GM12878 (cell line): ENCODE measurements at regions of chr14 and their contacts with region 1.

Region 1: GRCh38 chr14:70816525-70816924 is 7.2 kb upstream of the MAP3K9 start:
- DNase-seq: no peak
- ATAC-seq: no peak
- H3K4me3 ChIP-seq: no peak overlapping the region
- H3K27ac ChIP-seq: no peak overlapping the region
- H3K4me1 ChIP-seq: peaks cover 10% of the 10 kb centered on the region
- H3K27me3 ChIP-seq: no peaks in the 10 kb centered on the region
- CTCF ChIP-seq: no peak
- EP300 ChIP-seq: no peak
- POLR2A ChIP-seq: no peak
- RAD21 ChIP-seq: no peak

Region 2: DNA sequence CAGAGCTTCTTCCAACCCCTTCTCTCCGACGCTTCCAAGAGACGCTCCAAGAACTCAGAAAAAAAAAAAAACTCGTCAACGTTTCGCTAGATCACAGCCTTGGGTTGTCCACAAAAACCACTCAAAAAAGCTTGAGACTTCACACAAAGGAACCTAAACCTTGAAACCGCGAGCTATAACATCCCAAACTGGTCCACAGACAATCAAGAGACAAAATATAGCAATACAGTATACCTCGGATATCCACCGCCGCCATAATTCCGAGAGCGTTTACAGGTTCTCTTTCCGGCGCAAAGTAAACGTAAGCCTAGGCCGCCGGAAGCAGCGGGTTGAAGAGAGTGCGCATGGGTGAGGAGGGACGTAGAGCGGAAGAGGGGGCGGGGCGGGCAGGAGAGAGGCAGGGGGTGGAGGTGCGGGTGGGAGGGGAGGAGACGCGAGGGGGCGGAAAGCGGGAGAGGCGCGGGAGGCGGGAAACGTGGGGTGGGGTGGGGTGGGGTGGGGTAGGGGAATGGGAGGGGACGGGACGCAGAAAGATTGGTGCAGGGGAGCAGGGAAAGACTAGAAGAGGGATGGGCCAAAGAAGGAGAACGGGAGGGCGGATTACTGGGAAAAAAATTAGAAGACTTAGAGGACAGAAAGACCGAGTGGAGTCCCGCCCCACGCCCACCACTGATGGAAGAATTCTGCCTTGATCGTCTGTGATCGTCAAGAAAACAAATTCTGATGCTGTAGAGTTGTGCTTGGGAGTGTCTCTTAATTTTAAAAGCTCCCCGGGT is 216.0 kb before region 1 on chr14 and contains the start of gene MED6:
- CTCF ChIA-PET with region 1: interaction called, 11 read pairs
- POLR2A ChIA-PET with region 1: no interaction called
- RAD21 ChIA-PET with region 1: no interaction called
- SMC1A ChIA-PET with region 1: interaction called, 7 read pairs
- in situ Hi-C with region 1: no loop called
- intact Hi-C with region 1: loop called (anchors 2 kb)
- DNase-seq: peak; percentile 69
- ATAC-seq: peak; percentile 97
- H3K4me3 ChIP-seq: peak within 1 kb of the TSS; percentile 90
- H3K27ac ChIP-seq: peak within 1 kb of the TSS; percentile 83
- H3K4me1 ChIP-seq: peaks cover 16% of the 10 kb centered on the region
- H3K27me3 ChIP-seq: no peaks in the 10 kb centered on the region
- CTCF ChIP-seq: no peak
- EP300 ChIP-seq: no peak
- POLR2A ChIP-seq: peak; percentile 81
- RAD21 ChIP-seq: no peak
- polyA plus RNA-seq, gene MED6: 36.6 to 40.0 TPM

Region 3: GRCh38 chr14:70707138-70708038 is 109.1 kb before region 1 on chr14:
- CTCF ChIA-PET with region 1: interaction called, 36 read pairs
- POLR2A ChIA-PET with region 1: no interaction called
- RAD21 ChIA-PET with region 1: interaction called, 16 read pairs
- SMC1A ChIA-PET with region 1: interaction called, 5 read pairs
- in situ Hi-C with region 1: no loop called
- intact Hi-C with region 1: no loop called
- DNase-seq: peak; percentile 93
- ATAC-seq: peak; percentile 97
- H3K4me3 ChIP-seq: no peak overlapping the region
- H3K27ac ChIP-seq: peak overlapping the region; percentile 76
- H3K4me1 ChIP-seq: peaks cover 20% of the 10 kb centered on the region
- H3K27me3 ChIP-seq: no peaks in the 10 kb centered on the region
- CTCF ChIP-seq: no peak
- EP300 ChIP-seq: peak; percentile 37 to 50; a peak in 1 of 4 replicates
- POLR2A ChIP-seq: no peak
- RAD21 ChIP-seq: 0 out of 2 replicates have a peak, but pooled peaks have one; percentile 2

Region 4: GRCh38 chr14:70803321-70804310 is 12.9 kb before region 1 on chr14:
- CTCF ChIA-PET with region 1: interaction called, 25 read pairs
- POLR2A ChIA-PET with region 1: interaction called, 3 read pairs
- RAD21 ChIA-PET with region 1: interaction called, 21 read pairs
- SMC1A ChIA-PET with region 1: interaction called, 12 read pairs
- in situ Hi-C with region 1: no loop called
- intact Hi-C with region 1: no loop called
- DNase-seq: peak; percentile 66
- ATAC-seq: peak; percentile 96
- H3K4me3 ChIP-seq: peak overlapping the region; percentile 19; the same call in 1 of the 2 replicates
- H3K27ac ChIP-seq: no peak overlapping the region; the same call in 1 of the 2 replicates
- H3K4me1 ChIP-seq: peaks cover 38% of the 10 kb centered on the region
- H3K27me3 ChIP-seq: no peaks in the 10 kb centered on the region
- CTCF ChIP-seq: peak in 2 of 3 experiments; percentile 6 to 23; a peak in 2 of 6 replicates
- EP300 ChIP-seq: peak; percentile 35 to 86; a peak in 3 of 4 replicates
- POLR2A ChIP-seq: no peak
- RAD21 ChIP-seq: no peak

Region 5: DNA sequence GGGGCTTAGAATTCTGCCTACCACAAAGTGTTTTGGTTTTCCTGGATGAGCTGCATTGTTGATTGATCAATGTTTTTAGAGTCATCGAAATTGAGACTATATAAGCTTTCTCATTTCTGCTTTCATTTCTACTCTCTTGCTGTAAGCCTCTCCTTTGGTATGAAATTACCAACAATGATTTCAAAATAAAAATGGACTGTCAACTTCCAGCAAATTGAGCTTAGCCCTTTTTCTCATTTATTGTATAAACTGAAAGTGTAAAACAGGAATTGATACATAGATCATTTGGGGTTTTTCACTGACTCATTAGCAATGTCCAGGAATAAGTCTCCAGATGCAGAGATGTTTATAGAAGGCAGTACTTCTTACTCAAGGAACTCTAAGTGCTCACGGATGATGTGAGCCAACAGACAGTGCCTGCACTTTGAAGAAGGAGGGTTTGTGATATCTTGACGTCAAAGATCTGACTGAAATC is 70.7 kb after region 1 on chr14:
- CTCF ChIA-PET with region 1: interaction called, 14 read pairs
- POLR2A ChIA-PET with region 1: interaction called, 5 read pairs
- RAD21 ChIA-PET with region 1: interaction called, 4 read pairs
- SMC1A ChIA-PET with region 1: interaction called, 13 read pairs
- in situ Hi-C with region 1: no loop called
- intact Hi-C with region 1: no loop called
- DNase-seq: peak; percentile 71
- ATAC-seq: peak; percentile 72
- H3K4me3 ChIP-seq: peak overlapping the region; percentile 56
- H3K27ac ChIP-seq: peak overlapping the region; percentile 98
- H3K4me1 ChIP-seq: peaks cover 65% of the 10 kb centered on the region
- H3K27me3 ChIP-seq: no peaks in the 10 kb centered on the region
- CTCF ChIP-seq: no peak
- EP300 ChIP-seq: peak in 1 of 2 experiments; percentile 54; a peak in 1 of 4 replicates
- POLR2A ChIP-seq: no peak
- RAD21 ChIP-seq: no peak

Region 6: DNA sequence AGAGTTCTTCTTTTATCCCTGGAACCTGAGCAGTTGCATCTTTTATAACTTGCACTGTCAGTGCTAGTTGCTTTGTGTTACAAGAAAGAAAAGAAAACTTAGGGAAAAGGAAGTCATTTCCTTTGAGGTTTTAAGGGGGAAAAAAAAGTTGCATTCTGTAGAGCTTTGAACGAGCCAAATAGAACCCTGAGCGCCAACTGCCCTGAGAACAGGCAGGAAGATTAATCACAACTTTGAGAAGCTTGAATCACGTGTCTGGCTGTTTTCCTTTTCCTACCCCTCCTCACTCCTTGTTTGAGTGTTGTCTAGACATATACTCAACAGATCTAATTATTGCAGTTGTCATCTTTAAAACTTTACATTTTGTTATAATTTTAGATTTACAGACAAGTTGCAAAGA is 103.2 kb after region 1 on chr14:
- CTCF ChIA-PET with region 1: interaction called, 10 read pairs
- POLR2A ChIA-PET with region 1: no interaction called
- RAD21 ChIA-PET with region 1: interaction called, 6 read pairs
- SMC1A ChIA-PET with region 1: interaction called, 5 read pairs
- in situ Hi-C with region 1: no loop called
- intact Hi-C with region 1: no loop called
- DNase-seq: no peak
- ATAC-seq: no peak
- H3K4me3 ChIP-seq: no peak overlapping the region
- H3K27ac ChIP-seq: no peak overlapping the region
- H3K4me1 ChIP-seq: peaks cover 10% of the 10 kb centered on the region
- H3K27me3 ChIP-seq: no peaks in the 10 kb centered on the region
- CTCF ChIP-seq: no peak
- EP300 ChIP-seq: no peak
- POLR2A ChIP-seq: no peak
- RAD21 ChIP-seq: no peak

Region 7: DNA sequence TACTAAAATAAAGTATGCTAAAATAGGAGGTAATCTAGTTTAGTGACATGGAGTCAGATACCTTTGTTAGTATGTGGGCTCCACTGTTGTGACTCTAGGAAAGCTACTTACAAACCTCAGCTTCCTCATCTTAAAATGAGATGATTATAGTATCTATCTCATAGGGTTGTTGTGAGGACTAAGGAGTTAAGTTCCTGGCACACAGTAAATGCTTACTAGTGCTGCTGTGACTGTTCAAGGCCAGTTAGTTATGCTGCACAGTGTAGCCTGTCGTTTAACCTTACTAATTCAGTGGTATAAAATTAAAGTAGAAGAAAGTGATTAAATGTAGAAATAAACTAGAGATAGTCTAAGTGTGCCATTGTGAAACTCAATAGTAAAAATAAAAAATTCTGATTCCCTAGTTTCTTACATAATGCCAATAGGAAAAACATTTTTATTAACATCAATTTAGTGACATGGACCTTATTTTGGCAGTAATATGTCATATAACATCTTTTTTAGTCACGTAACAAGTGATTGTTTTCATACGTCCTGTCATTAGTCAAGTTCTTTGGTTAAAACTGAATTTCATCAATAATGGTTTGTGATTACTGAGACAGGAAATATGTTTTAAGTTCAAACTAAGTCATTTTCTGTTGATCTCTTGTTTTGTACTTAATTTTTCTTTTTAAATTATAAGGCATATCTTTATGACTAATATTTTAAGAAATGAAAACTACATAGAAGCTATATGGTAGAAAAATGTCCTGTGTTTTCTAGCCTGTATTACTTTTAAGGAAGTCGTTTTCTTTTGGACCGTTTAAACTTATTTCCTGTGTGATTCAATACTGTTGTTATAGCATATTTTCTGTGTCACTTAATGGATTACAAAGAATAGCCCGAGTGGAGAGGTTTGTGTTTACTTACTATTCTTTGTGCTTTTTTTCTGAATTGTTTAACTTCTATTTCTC is 164.8 kb after region 1 on chr14:
- CTCF ChIA-PET with region 1: interaction called, 39 read pairs
- POLR2A ChIA-PET with region 1: no interaction called
- RAD21 ChIA-PET with region 1: interaction called, 12 read pairs
- SMC1A ChIA-PET with region 1: interaction called, 35 read pairs
- in situ Hi-C with region 1: no loop called
- intact Hi-C with region 1: no loop called
- DNase-seq: no peak
- ATAC-seq: no peak; the same call in 2 of the 3 replicates
- H3K4me3 ChIP-seq: no peak overlapping the region
- H3K27ac ChIP-seq: no peak overlapping the region
- H3K4me1 ChIP-seq: no peaks in the 10 kb centered on the region
- H3K27me3 ChIP-seq: no peaks in the 10 kb centered on the region
- CTCF ChIP-seq: no peak
- EP300 ChIP-seq: no peak
- POLR2A ChIP-seq: no peak
- RAD21 ChIP-seq: no peak